ENCODE measurements at regions of chr4 and their contacts with region 1.

Region 1: GRCh38 chr4:183175631-183176232 is 76.7 kb downstream of the WWC2 start:
- DNase-seq: peak; percentile 60
- ATAC-seq: peak; percentile 76
- H3K4me3 ChIP-seq: no peak overlapping the region
- H3K27ac ChIP-seq: no peak overlapping the region
- H3K4me1 ChIP-seq: peaks cover 20% of the 10 kb centered on the region
- H3K27me3 ChIP-seq: no peaks in the 10 kb centered on the region
- CTCF ChIP-seq: no peak
- POLR2A ChIP-seq: no peak
- RAD21 ChIP-seq: no peak

Region 2: DNA sequence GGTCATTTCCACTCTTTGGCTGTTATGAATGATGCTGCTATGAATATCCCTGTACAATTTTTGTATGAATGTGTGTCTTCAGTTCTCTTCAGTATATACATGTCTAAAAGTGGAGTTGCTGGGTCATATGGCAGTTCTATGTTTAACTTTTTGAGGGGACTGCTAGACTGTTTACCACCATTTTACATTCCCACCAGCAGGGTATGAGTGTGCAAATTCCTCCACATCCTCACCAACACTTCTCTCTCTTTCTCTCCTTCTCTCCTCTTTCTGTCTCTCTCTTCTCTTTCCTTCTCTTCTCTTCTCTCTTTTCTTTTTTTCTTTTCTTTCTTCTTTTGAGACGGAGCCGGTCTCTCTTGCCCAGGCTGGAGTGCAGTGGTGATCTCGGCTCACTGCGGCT is 68.9 kb before region 1 on chr4:
- CTCF ChIA-PET with region 1: no interaction called
- POLR2A ChIA-PET with region 1: no interaction called
- dilution Hi-C with region 1: no loop called
- in situ Hi-C with region 1: no loop called
- intact Hi-C with region 1: loop called (anchors 2 kb)
- DNase-seq: peak; percentile 41
- ATAC-seq: peak; percentile 22; the same call in 1 of the 2 replicates
- H3K4me3 ChIP-seq: no peak overlapping the region
- H3K27ac ChIP-seq: no peak overlapping the region; the same call in 1 of the 2 replicates
- H3K4me1 ChIP-seq: peaks cover 21% of the 10 kb centered on the region
- H3K27me3 ChIP-seq: no peaks in the 10 kb centered on the region
- CTCF ChIP-seq: peak; percentile 35
- POLR2A ChIP-seq: no peak
- RAD21 ChIP-seq: no peak

Region 3: DNA sequence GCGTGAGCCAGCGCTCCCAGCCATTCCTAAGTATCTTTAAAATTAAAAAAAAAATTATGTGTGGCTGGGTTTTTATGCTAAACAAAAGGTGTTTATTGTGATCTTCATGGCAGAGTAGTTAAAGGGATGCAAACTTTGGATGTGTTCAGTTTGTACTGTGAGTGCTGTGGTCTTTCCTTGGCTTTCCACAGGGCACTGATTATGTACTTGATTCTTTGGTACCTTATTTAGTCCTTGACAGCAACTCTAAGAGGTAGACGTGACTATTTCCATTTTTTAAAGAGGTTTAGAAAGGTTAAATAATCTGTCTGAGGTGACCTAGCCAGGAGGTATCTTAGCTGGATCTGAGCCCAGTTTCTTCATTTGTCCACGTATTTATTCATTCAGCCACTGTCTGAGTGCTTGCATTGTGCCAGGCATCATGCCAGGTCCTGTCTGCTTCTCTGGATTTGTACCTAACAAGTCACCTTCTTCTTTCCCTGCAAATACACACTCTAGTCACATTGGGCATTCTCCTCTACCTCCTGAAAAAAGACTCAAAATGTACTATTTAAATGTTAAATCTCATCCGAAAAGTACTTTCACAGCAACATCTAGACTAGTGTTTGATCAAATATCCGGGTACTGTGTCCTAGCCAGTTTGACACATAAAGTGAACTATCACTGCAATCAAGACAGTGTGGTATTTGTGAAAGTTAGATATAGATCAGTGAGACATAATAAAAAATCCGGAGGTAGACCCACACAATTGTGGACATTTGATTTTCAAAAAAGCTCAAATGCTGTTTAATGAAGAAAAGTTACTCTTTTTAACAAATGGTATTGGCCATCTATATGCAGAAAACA is 45.2 kb before region 1 on chr4:
- CTCF ChIA-PET with region 1: interaction called, 3 read pairs
- POLR2A ChIA-PET with region 1: no interaction called
- dilution Hi-C with region 1: no loop called
- in situ Hi-C with region 1: no loop called
- intact Hi-C with region 1: loop called (anchors 1 kb)
- DNase-seq: peak; percentile 52
- ATAC-seq: no peak
- H3K4me3 ChIP-seq: no peak overlapping the region
- H3K27ac ChIP-seq: no peak overlapping the region
- H3K4me1 ChIP-seq: peaks cover 9% of the 10 kb centered on the region
- H3K27me3 ChIP-seq: no peaks in the 10 kb centered on the region
- CTCF ChIP-seq: no peak
- POLR2A ChIP-seq: no peak
- RAD21 ChIP-seq: no peak

Region 4: DNA sequence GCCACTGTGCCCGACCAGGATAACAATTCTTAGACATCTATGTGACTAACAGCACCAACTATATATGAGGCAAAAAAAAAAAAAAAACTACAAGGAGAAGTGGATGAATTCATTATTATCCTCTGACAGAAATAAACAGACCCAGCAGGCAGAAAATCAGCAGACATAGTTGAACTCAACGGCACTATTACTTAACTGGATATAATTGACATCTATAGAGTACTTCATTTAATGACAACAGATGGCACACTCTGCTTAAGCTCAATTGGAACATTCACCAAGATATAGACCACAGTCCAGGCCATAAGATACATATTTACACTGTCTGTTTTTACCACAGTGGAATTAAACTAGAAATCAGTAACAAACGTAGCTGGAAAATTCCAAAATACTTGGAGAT is 131.1 kb after region 1 on chr4:
- CTCF ChIA-PET with region 1: no interaction called
- POLR2A ChIA-PET with region 1: no interaction called
- dilution Hi-C with region 1: no loop called
- in situ Hi-C with region 1: no loop called
- intact Hi-C with region 1: no loop called
- DNase-seq: no peak
- ATAC-seq: no peak
- H3K4me3 ChIP-seq: no peak overlapping the region
- H3K27ac ChIP-seq: no peak overlapping the region
- H3K4me1 ChIP-seq: no peaks in the 10 kb centered on the region
- H3K27me3 ChIP-seq: no peaks in the 10 kb centered on the region
- CTCF ChIP-seq: no peak
- POLR2A ChIP-seq: no peak
- RAD21 ChIP-seq: no peak